ENCODE measurements at regions of chr1 and their contacts with region 1.

Region 1: GRCh38 chr1:165597883-165598675 is 33.0 kb upstream of the MGST3 start:
- DNase-seq: peak; percentile 79
- ATAC-seq: peak; percentile 98
- H3K4me3 Mint-ChIP-seq: peak overlapping the region; percentile 92
- H3K27ac Mint-ChIP-seq: peak overlapping the region; percentile 62
- H3K4me1 Mint-ChIP-seq: peaks cover 25% of the 10 kb centered on the region
- H3K27me3 Mint-ChIP-seq: peaks cover 25% of the 10 kb centered on the region
- CTCF ChIP-seq: no peak

Region 2: GRCh38 chr1:165257969-165258459 is 340.1 kb before region 1 on chr1:
- CTCF ChIA-PET with region 1: no interaction called
- POLR2A ChIA-PET with region 1: no interaction called
- intact Hi-C with region 1: loop called (anchors 1 kb)
- DNase-seq: no peak
- ATAC-seq: no peak
- H3K4me3 Mint-ChIP-seq: no peak overlapping the region
- H3K27ac Mint-ChIP-seq: no peak overlapping the region
- H3K4me1 Mint-ChIP-seq: no peaks in the 10 kb centered on the region
- H3K27me3 Mint-ChIP-seq: peaks cover 17% of the 10 kb centered on the region
- CTCF ChIP-seq: no peak

Region 3: GRCh38 chr1:165630629-165631341 is 32.7 kb after region 1 on chr1 and contains the start of gene MGST3:
- CTCF ChIA-PET with region 1: no interaction called
- POLR2A ChIA-PET with region 1: interaction called, 4 read pairs
- intact Hi-C with region 1: loop called (anchors 1 kb)
- DNase-seq: peak; percentile 84
- ATAC-seq: peak; percentile 93
- H3K4me3 Mint-ChIP-seq: no peak within 1 kb of the TSS
- H3K27ac Mint-ChIP-seq: no peak within 1 kb of the TSS
- H3K4me1 Mint-ChIP-seq: peaks cover 33% of the 10 kb centered on the region
- H3K27me3 Mint-ChIP-seq: no peaks in the 10 kb centered on the region
- CTCF ChIP-seq: no peak
- total RNA-seq, gene MGST3: 31.3 and 33.4 TPM in 2 replicates

Region 4: DNA sequence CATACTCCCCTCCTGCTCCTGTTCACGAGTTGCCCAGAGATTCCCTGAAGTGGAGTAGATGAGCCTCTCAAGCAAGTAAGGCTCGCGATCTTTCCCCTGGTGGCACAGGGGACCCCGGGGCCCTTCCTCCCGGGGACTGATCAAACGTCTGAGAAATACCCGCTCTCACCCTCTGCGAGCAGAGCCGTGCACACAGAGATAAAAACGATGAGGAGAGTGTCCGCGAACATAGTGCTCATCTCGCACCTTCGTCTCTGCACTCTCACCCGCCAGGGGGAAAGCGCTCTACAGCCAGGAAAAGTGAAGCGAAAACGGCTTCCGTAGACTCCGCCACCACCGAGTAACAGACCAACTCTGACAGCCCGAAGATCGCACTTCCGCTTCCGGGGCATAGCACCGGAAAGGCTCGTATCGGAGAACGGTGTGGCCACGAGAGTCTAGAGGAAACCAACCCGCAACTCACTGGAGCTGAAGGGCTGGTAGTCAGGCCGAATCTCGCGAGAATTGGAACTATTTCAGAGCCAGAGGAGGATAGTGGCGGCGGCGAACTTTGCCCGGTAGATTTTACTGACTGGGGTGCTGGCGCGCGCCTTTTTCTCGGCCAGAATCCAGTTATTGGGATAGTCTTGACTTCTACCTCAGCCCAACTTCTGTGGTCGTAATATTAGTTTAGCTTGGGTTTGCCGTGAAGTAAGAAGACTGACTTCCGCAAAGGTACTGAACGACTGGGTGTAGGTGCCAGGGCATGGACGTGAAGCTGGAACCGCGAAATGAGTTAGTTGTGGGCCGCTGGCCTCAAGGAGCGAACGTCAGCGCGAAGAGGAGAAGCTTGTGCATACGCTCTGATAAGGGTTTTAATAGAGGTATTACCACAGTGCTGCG is 170.7 kb after region 1 on chr1 and contains the start of gene TMCO1:
- CTCF ChIA-PET with region 1: interaction called, 3 read pairs
- POLR2A ChIA-PET with region 1: interaction called, 5 read pairs
- intact Hi-C with region 1: loop called (anchors 1 kb)
- DNase-seq: peak; percentile 84
- ATAC-seq: peak; percentile 95
- H3K4me3 Mint-ChIP-seq: peak within 1 kb of the TSS; percentile 97
- H3K27ac Mint-ChIP-seq: peak within 1 kb of the TSS; percentile 98
- H3K4me1 Mint-ChIP-seq: peaks cover 54% of the 10 kb centered on the region
- H3K27me3 Mint-ChIP-seq: no peaks in the 10 kb centered on the region
- CTCF ChIP-seq: no peak
- total RNA-seq, gene TMCO1: 43.0 and 48.3 TPM in 2 replicates

Region 5: DNA sequence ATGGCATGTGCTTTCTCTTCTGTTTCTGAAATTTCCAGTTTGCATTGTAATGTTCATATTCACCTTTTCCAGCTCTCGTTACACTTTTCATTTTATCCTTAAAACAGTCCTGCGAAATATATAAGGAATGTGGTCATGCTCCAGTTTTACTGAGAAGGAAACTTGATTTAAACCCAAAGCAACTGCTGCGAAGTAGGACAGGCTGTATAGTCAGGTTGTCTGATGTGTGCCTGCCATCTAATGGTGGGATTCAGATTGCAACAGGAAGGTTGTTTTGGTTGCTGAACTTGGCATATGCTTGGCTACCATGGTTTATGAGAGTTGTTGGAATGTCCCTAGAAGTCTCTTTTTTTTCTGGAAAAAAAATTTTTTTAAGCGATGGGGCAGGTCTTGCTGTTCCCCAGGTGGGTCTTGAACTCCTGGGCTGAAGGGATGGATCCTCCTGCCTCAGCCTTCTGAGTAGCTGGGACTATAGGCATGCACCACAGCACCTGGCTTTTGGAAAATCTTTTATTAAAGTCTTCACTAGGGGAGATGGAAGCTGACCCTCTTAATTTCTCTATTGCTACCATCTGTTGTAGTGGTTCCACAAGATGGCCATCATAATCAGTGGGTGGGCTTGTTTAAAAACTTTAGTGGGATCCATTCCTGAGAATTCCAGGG is 316.2 kb after region 1 on chr1:
- CTCF ChIA-PET with region 1: interaction called, 81 read pairs
- POLR2A ChIA-PET with region 1: interaction called, 5 read pairs
- intact Hi-C with region 1: loop called (anchors 1 kb)
- DNase-seq: peak; percentile 20
- ATAC-seq: peak; percentile 93
- H3K4me3 Mint-ChIP-seq: no peak overlapping the region
- H3K27ac Mint-ChIP-seq: no peak overlapping the region
- H3K4me1 Mint-ChIP-seq: peaks cover 2% of the 10 kb centered on the region
- H3K27me3 Mint-ChIP-seq: no peaks in the 10 kb centered on the region
- CTCF ChIP-seq: peak; percentile 99

Region 6: GRCh38 chr1:166489670-166490436 is 891.8 kb after region 1 on chr1:
- CTCF ChIA-PET with region 1: interaction called, 3 read pairs
- POLR2A ChIA-PET with region 1: no interaction called
- intact Hi-C with region 1: loop called (anchors 2 kb)
- DNase-seq: peak; percentile 34
- ATAC-seq: peak; percentile 77
- H3K4me3 Mint-ChIP-seq: no peak overlapping the region
- H3K27ac Mint-ChIP-seq: no peak overlapping the region
- H3K4me1 Mint-ChIP-seq: peaks cover 6% of the 10 kb centered on the region
- H3K27me3 Mint-ChIP-seq: peaks cover 3% of the 10 kb centered on the region
- CTCF ChIP-seq: no peak

Measured in activated B cell treated with CpG ODN at 0.5 μM for 24 hours (primary cell).